ENCODE measurements at regions of chr19 and their contacts with region 1.

Region 1: GRCh38 chr19:3176603-3177501 is 1.7 kb upstream of the S1PR4 start:
- DNase-seq: peak; percentile 94
- H3K4me3 ChIP-seq: no peak overlapping the region
- H3K27ac ChIP-seq: peak overlapping the region; percentile 95
- H3K4me1 ChIP-seq: peaks cover 36% of the 10 kb centered on the region
- H3K27me3 ChIP-seq: no peaks in the 10 kb centered on the region
- CTCF ChIP-seq: no peak

Region 2: DNA sequence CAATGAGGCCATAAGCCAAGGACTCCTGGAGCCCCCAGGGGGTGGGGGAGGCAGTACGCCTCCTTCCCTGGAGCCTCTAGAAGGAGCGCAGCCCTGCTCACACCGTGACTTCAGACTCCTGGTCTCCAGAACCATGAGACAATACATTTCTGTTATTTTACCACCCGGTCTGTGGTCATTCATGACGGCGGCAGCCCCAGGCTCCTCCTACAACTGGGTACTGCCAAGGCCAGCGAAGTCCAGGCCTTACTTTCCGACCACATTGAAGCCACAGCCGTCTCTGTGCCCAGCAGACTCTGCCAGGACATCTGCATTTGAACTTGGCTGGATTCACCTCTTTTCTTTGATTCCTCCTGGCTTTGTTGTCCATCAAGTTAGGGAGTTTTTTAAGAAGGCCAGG is 484.9 kb before region 1 on chr19:
- CTCF ChIA-PET with region 1: no interaction called
- dilution Hi-C with region 1: loop called (anchors 10 kb)
- in situ Hi-C with region 1: no loop called
- intact Hi-C with region 1: no loop called
- DNase-seq: no peak
- H3K4me3 ChIP-seq: no peak overlapping the region
- H3K27ac ChIP-seq: no peak overlapping the region
- H3K4me1 ChIP-seq: no peaks in the 10 kb centered on the region
- H3K27me3 ChIP-seq: no peaks in the 10 kb centered on the region
- CTCF ChIP-seq: no peak

Region 3: GRCh38 chr19:3006075-3006767 is 170.6 kb before region 1 on chr19:
- CTCF ChIA-PET with region 1: no interaction called
- dilution Hi-C with region 1: loop called (anchors 5 kb)
- in situ Hi-C with region 1: no loop called
- intact Hi-C with region 1: no loop called
- DNase-seq: no peak
- H3K4me3 ChIP-seq: no peak overlapping the region
- H3K27ac ChIP-seq: no peak overlapping the region
- H3K4me1 ChIP-seq: no peaks in the 10 kb centered on the region
- H3K27me3 ChIP-seq: no peaks in the 10 kb centered on the region
- CTCF ChIP-seq: no peak

Region 4: DNA sequence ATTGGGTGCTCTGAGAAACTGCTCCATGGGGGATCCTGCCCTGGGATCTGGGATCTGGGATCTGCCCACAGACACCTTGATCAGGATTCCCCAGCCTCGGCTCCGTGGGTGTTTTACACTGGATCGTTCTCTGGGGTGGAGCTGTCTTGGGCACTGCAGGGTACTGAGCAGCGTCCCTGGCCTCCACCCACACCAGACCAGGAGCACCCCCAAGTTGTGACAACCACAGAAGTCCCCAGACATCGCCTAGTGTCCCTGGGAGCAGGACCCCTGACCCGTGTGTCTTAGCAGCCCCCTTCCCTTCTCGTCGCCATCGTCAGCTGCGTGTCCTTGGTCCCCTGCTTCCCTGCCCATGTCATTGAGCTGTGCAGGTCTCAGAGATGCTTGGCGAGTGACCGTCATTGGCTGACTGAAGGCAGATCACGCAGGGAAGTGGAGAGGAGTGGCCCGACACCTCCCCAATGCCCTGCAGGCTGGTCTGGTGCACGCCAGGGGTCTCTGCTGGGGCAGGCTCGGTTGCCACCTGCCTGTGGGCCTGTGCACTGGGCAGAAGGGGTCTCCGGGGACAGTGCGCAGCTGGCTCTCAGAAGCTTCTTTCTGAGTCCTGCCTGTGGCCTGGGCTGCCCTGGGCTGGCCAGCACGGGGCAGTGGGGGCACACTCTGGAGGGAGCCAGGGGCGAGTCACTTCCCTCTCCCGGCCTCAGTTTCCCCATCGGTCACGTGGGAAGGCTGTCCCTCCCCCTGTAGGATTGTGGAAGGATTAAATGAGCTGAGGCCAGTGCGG is 76.6 kb before region 1 on chr19:
- CTCF ChIA-PET with region 1: no interaction called
- dilution Hi-C with region 1: loop called (anchors 5 kb)
- in situ Hi-C with region 1: no loop called
- intact Hi-C with region 1: no loop called
- DNase-seq: no peak
- H3K4me3 ChIP-seq: no peak overlapping the region
- H3K27ac ChIP-seq: no peak overlapping the region
- H3K4me1 ChIP-seq: peaks cover 39% of the 10 kb centered on the region
- H3K27me3 ChIP-seq: no peaks in the 10 kb centered on the region
- CTCF ChIP-seq: no peak

Region 5: DNA sequence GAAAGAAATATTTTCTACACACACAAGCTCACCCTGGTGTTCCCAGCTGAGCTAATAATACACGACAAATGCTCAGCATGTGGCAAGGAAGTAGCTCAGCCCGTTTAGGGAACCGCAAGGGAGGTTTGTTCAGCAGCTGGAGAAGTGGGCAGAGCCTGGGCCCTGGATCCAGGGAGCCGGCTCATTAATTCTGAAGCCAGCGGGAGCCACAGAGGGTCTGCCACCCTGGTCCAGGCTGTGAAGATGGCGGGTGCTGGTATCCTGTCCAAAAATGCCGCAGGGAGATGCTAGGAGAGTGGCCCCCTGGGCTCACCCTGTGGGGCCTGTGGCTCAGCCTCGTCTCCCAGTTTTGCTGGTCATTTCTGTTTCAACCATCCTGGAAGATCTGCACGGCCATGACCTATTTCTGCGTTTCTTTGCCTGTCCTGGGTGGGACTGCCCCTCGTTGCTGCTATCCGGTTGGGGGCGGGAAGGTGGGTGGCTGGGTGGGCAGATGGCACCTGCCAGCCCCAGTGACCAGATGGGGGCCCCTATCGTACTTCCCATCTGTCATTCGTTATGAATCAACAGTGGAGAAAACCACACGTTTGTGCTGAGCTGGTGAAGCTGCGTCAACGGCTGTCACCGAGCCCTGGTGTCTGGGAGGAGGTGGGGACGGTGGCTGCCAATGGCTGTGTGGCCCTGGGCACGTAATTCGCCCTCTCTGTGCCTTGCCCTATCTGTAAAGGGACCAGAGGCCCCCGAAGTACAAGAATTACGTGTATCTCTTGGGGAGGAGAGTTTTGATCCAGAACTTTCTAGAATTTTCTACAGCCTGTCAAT is 43.7 kb before region 1 on chr19:
- CTCF ChIA-PET with region 1: interaction called, 3 read pairs
- dilution Hi-C with region 1: loop called (anchors 10 kb)
- in situ Hi-C with region 1: no loop called
- intact Hi-C with region 1: loop called (anchors 5 kb)
- DNase-seq: no peak
- H3K4me3 ChIP-seq: no peak overlapping the region
- H3K27ac ChIP-seq: no peak overlapping the region
- H3K4me1 ChIP-seq: peaks cover 10% of the 10 kb centered on the region
- H3K27me3 ChIP-seq: no peaks in the 10 kb centered on the region
- CTCF ChIP-seq: no peak